ENCODE measurements at regions of chr2 and their contacts with region 1.

Region 1: GRCh38 chr2:187581125-187581896 is 27.1 kb upstream of the TFPI start:
- DNase-seq: peak in 1 of 2 donors; percentile 33
- ATAC-seq: no peak
- H3K4me3 ChIP-seq: peak overlapping the region in 7 of 10 donors; percentile 5 to 46 (median 38)
- H3K27ac ChIP-seq: peak overlapping the region in 1 of 10 donors; percentile 1
- H3K4me1 ChIP-seq: peaks cover 0 to 22% (median 5%) of the 10 kb centered on the region in 9 donors
- H3K27me3 ChIP-seq: no peaks in the 10 kb centered on the region
- CTCF ChIP-seq: peak; percentile 48 to 82 (median 71)

Region 2: GRCh38 chr2:187499941-187500532 is 81.3 kb before region 1 on chr2:
- intact Hi-C with region 1: loop called (anchors 2 to 5 kb)
- DNase-seq: peak; percentile 27 to 57
- ATAC-seq: peak in 7 of 8 donors; percentile 58 to 86 (median 75)
- H3K4me3 ChIP-seq: no peak overlapping the region
- H3K27ac ChIP-seq: no peak overlapping the region
- H3K4me1 ChIP-seq: peaks cover 0 to 19% (median 6%) of the 10 kb centered on the region in 9 donors
- H3K27me3 ChIP-seq: no peaks in the 10 kb centered on the region
- CTCF ChIP-seq: peak; percentile 71 to 94 (median 83)

Region 3: GRCh38 chr2:187614756-187615155 is 33.4 kb after region 1 on chr2:
- intact Hi-C with region 1: no loop called
- DNase-seq: no peak
- ATAC-seq: no peak
- H3K4me3 ChIP-seq: no peak overlapping the region
- H3K27ac ChIP-seq: no peak overlapping the region
- H3K4me1 ChIP-seq: no peaks in the 10 kb centered on the region
- H3K27me3 ChIP-seq: no peaks in the 10 kb centered on the region
- CTCF ChIP-seq: no peak

Region 4: DNA sequence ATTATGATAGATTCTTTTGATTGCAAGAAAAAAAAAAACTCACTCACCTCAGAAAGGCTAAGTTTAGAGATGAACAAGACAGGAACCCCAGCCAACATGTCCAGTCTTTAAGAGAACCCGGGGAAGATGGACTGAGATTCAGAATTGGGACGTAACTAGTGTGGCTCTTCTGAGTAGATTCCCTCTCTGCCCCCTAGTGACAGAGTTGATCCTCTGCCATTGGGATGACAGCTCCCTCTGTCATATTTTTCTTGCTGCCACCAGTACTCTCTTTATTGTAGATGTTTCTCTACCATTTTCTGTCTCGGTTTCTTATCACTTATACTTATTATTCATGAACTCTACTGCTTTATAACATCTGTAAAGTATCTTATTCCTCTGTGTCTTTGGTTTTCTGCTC is 788.1 kb after region 1 on chr2:
- intact Hi-C with region 1: loop called in 1 of 10 experiments (anchors 10 kb)
- DNase-seq: peak in 1 of 2 donors; percentile 51
- ATAC-seq: peak in 7 of 8 donors; percentile 67 to 78 (median 71)
- H3K4me3 ChIP-seq: no peak overlapping the region
- H3K27ac ChIP-seq: no peak overlapping the region
- H3K4me1 ChIP-seq: peaks cover 0 to under 1% (median 0%) of the 10 kb centered on the region in 9 donors
- H3K27me3 ChIP-seq: no peaks in the 10 kb centered on the region
- CTCF ChIP-seq: peak; percentile 30 to 79 (median 69)

Region 5: DNA sequence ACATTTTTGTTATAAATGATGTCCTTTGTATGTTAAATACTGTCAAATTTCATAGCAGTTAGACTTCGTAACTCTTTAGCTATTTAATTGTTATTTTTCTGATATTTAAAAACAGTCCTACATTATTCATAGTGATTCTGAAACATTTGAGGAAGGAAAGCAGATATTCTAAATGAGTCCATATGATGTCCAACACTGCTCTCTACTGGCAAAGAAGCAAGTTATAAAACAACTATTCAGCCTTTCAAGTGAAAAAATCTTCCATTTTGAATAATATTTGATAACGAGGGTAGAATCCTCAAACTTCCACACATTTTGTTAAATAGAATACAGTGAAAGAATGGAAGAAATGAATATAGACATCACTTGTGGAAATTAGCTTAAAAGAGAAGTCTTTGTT is 931.1 kb after region 1 on chr2:
- intact Hi-C with region 1: loop called in 6 of 10 experiments (anchors 5 to 10 kb)
- DNase-seq: no peak
- ATAC-seq: peak in 1 of 8 donors; percentile 47
- H3K4me3 ChIP-seq: no peak overlapping the region
- H3K27ac ChIP-seq: no peak overlapping the region
- H3K4me1 ChIP-seq: no peaks in the 10 kb centered on the region
- H3K27me3 ChIP-seq: no peaks in the 10 kb centered on the region
- CTCF ChIP-seq: peak in 7 of 9 donors; percentile 41 to 70 (median 62)

Measured in heart right ventricle (tissue), 16 donors.